MCF 10A (cell line): ENCODE measurements at regions of chr3 and their contacts with region 1.

Region 1: GRCh38 chr3:39809181-39809994 is at the start of gene MYRIP:
- DNase-seq: peak; percentile 36
- H3K4me3 Mint-ChIP-seq: peak within 1 kb of the TSS; percentile 69
- H3K27ac Mint-ChIP-seq: no peak within 1 kb of the TSS
- H3K4me1 Mint-ChIP-seq: peaks cover 11% of the 10 kb centered on the region
- H3K27me3 Mint-ChIP-seq: peaks cover 24% of the 10 kb centered on the region
- CTCF ChIP-seq: no peak
- total RNA-seq, gene MYRIP: 0.10 and 0.19 TPM in 2 replicates

Region 2: DNA sequence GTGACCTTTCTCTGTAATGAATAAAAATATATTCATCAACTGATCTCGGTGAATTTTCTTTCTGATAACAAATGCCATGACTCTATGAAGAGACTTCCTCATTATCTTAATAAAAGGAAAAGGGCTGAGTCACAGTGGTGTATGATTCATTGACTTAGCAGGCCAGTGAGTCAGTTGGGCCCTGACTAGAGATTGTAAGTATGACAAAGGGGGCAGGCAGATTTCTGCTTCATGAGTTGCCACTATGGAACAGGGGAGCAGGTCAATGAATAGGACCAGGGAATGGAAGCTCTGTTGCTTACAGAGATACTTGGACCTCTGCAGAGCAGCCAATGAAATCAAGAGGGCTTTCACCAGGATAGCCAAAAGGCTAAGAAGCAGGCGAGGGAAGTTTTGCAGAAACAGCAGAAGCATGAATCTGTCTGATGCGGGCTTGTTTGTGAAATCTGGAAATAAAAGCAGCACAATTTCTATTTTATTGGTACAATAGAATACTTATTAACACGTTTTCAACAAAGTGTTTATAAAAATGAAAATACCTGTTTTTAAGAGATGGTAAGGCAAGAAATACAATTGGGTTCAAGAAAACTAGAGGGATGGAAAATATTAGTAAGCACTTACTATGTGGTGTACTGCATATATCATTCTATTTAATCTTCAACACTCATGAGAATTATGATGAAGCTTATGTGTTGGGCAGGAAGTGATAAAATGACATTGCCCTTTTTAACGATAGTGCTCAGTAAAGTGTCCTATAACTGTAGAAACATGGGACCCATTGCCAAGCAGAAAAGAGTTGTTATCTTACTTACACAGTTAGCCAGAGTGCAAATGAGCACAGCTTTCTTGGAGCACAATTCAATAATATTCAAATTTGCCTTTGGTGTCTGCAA is 169.8 kb before region 1 on chr3:
- CTCF ChIA-PET with region 1: interaction called, 4 read pairs
- POLR2A ChIA-PET with region 1: no interaction called
- intact Hi-C with region 1: loop called (anchors 10 kb)
- DNase-seq: peak; percentile 92
- H3K4me3 Mint-ChIP-seq: no peak overlapping the region
- H3K27ac Mint-ChIP-seq: peak overlapping the region; percentile 35
- H3K4me1 Mint-ChIP-seq: peaks cover 22% of the 10 kb centered on the region
- H3K27me3 Mint-ChIP-seq: no peaks in the 10 kb centered on the region
- CTCF ChIP-seq: no peak

Region 3: DNA sequence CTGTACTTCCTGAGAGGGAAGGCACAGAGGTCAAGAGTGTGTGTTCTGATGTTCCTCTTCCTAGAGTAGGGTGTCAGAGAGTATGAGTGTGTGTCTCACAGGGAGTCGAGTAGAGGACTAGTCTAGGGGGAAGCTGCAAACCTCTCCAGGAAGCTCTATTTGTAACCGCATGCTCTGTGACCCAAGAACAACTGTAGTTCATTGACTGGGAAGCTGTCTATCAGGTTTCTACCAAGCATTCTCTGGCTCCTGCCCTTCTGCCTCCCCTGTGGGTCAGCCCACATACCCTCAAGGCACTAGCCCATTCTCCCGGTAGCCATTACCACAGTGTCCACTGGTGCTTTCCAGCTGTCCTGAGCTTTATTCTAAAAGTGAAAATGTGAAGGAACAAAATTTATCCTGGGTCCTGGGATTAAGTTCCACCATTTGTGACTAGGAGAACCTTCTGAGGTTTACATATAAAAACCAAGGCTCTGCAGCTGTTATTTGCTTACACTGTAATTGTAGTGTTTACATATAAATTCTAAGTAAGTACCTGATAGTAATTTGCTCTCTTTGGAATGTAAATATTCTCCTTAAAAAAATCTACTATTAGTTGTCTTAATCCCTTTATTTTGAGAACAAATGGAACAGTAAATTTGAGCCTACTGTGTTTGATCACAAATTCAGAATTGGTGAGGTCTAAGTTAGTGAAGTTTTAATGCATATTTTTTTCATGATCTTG is 40.8 kb after region 1 on chr3:
- CTCF ChIA-PET with region 1: no interaction called
- POLR2A ChIA-PET with region 1: no interaction called
- intact Hi-C with region 1: no loop called
- DNase-seq: no peak
- H3K4me3 Mint-ChIP-seq: no peak overlapping the region
- H3K27ac Mint-ChIP-seq: no peak overlapping the region
- H3K4me1 Mint-ChIP-seq: no peaks in the 10 kb centered on the region
- H3K27me3 Mint-ChIP-seq: no peaks in the 10 kb centered on the region
- CTCF ChIP-seq: no peak

Region 4: DNA sequence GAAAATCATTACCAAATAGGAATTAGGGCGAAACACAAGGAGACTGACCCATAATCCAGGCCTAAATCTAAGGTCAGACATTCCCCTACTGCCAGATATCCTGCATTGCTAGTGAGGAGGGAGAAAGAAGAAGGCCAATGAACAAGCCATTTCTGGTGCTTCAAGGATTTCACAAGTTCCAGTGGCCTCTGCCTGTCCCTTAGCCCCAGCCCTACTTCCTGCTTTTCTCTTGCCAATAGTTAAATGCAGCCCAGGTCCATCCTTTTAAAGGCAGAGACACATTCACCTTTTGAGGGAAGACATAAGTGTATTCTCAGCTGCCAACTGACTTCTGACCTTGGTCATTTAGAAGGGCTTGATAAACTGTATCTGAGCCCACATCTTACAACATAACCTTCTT is 851.2 kb after region 1 on chr3:
- CTCF ChIA-PET with region 1: no interaction called
- POLR2A ChIA-PET with region 1: no interaction called
- intact Hi-C with region 1: no loop called
- DNase-seq: no peak
- H3K4me3 Mint-ChIP-seq: no peak overlapping the region
- H3K27ac Mint-ChIP-seq: no peak overlapping the region
- H3K4me1 Mint-ChIP-seq: no peaks in the 10 kb centered on the region
- H3K27me3 Mint-ChIP-seq: no peaks in the 10 kb centered on the region
- CTCF ChIP-seq: no peak